ENCODE measurements at regions of chr12 and their contacts with region 1.

Region 1: DNA sequence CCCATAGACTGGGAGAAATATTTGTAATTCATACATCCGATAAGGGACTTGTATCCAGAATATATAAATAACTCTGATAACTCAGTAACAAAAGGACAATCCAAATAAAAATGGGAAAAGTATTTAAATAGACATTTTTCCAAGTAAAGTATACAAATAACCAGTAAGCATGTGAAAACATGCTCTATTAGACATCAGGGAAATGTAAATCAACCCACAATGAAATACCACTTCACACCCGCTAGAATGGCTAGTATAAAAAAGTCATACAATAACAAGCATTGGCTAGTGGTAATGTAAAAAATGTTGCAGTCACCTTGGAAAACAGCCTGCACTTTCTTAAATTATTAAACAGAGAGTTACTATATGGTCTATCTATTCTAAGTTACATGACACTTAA is 650.7 kb downstream of the C12orf50 start:
- DNase-seq: no peak
- ATAC-seq: no peak
- H3K4me3 ChIP-seq: no peak overlapping the region
- H3K27ac ChIP-seq: no peak overlapping the region
- H3K4me1 ChIP-seq: no peaks in the 10 kb centered on the region
- H3K27me3 ChIP-seq: no peaks in the 10 kb centered on the region
- CTCF ChIP-seq: no peak

Region 2: GRCh38 chr12:87430444-87430843 is 51.9 kb after region 1 on chr12:
- intact Hi-C with region 1: loop called in 1 of 2 experiments (anchors 2 kb)
- DNase-seq: no peak
- ATAC-seq: no peak
- H3K4me3 ChIP-seq: no peak overlapping the region
- H3K27ac ChIP-seq: no peak overlapping the region
- H3K4me1 ChIP-seq: no peaks in the 10 kb centered on the region
- H3K27me3 ChIP-seq: no peaks in the 10 kb centered on the region
- CTCF ChIP-seq: no peak

Measured in psoas muscle (tissue), 8 donors.